ENCODE measurements at regions of chr3 and their contacts with region 1.

Region 1: GRCh38 chr3:27927882-27928281 is 205.8 kb upstream of the EOMES start:
- DNase-seq: no peak
- H3K4me3 Mint-ChIP-seq: peak overlapping the region; percentile 45
- H3K27ac Mint-ChIP-seq: peak overlapping the region; percentile 66
- H3K4me1 Mint-ChIP-seq: peaks cover 43% of the 10 kb centered on the region
- H3K27me3 Mint-ChIP-seq: no peaks in the 10 kb centered on the region

Region 2: DNA sequence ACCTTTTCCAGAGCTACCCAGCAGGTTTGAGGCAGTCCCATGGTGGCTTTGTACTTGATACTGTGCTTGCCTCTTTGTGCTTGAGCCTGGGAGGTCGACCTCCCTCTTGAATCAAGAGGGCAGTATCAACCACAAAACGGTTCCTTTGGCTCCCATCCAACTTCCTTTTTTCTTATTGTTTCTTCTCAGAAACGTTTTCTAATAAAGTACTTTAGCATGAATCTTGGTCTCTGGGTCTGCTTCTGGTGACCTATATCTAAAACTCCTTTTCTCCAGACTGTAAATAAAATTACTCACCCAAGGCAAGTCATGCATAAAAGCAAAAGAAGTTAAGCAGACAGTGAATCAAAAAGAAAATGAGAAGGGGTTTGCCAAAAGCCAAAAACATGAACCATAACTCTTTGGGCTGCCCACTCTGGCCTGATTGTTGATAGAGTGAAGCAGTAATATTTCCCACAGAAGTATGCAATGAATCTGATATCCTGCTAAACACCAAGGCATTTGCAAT is 331.5 kb before region 1 on chr3:
- intact Hi-C with region 1: loop called (anchors 10 kb)
- DNase-seq: no peak
- H3K4me3 Mint-ChIP-seq: no peak overlapping the region
- H3K27ac Mint-ChIP-seq: no peak overlapping the region
- H3K4me1 Mint-ChIP-seq: peaks cover 15% of the 10 kb centered on the region
- H3K27me3 Mint-ChIP-seq: no peaks in the 10 kb centered on the region

Region 3: GRCh38 chr3:27752926-27753325 is 175.0 kb before region 1 on chr3:
- intact Hi-C with region 1: loop called (anchors 5 kb)
- DNase-seq: peak; percentile 73
- H3K4me3 Mint-ChIP-seq: peak overlapping the region; percentile 6
- H3K27ac Mint-ChIP-seq: peak overlapping the region; percentile 90
- H3K4me1 Mint-ChIP-seq: peaks cover 21% of the 10 kb centered on the region
- H3K27me3 Mint-ChIP-seq: no peaks in the 10 kb centered on the region

Region 4: DNA sequence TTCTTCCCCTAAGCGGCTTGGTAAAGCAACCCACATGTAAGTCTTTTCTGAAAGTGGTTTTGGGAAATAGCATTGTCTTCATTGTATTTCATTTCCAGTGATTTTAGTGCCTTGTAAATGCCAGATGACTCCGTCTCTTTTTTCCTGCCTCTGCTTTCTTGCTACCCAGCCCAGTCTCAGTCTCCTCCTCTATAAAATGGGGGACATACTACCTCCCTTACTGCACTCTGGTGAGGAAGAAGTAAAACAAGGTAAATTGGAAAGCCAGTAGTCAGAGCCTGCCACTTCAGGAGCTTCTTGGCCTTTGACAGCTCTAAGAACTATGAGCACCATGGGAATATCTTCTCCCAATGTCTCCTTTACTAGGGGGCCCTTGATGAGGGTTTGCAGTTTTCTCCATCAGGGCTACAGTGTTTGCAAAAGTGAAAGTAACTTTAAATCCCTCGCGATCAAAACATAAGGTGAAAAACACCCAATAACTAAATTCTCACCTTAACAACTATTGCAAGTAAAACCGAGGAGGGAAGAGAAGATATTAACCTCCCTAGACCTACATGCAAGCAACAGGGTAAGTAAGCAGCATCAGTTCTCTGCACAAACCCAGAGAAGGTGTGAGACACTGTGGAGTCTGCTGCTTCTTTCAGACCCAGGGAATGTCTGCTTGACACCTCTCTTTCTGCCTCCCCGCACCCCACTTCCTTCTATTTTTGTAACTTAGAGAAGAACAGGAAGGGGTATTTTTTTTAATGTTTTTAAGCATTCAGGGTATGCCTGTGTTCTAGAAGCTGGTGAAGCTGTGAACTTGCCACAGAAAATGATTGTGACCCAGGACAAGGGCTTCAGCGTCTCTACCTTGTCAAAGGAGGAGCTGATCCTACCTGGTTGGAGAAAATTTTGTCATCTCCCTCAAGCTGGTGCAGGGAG is 46.7 kb before region 1 on chr3:
- intact Hi-C with region 1: loop called (anchors 5 kb)
- DNase-seq: peak; percentile 84
- H3K4me3 Mint-ChIP-seq: peak overlapping the region; percentile 88
- H3K27ac Mint-ChIP-seq: peak overlapping the region; percentile 88
- H3K4me1 Mint-ChIP-seq: peaks cover 33% of the 10 kb centered on the region
- H3K27me3 Mint-ChIP-seq: peaks cover 2% of the 10 kb centered on the region

Region 5: DNA sequence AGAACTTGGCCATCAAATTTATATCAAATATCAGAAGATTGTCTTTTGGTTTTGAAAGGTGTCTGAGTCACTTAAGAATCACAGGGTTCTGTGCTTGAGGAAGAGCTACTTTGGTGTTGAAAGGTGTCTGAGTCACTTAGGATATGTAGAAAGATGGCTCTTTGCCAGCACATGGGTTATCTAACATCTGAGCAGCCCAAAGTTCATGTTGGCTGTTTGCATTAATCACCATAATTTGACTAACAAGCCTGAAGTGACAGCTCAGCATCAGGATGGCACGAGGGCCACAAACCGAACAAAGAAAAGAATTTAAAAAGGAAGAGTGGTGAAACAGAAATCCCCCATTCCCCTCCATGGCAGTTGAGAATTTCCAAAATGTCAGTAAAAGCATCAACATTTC is 123.0 kb after region 1 on chr3:
- intact Hi-C with region 1: loop called (anchors 5 kb)
- DNase-seq: no peak
- H3K4me3 Mint-ChIP-seq: no peak overlapping the region
- H3K27ac Mint-ChIP-seq: peak overlapping the region; percentile 4
- H3K4me1 Mint-ChIP-seq: peaks cover 9% of the 10 kb centered on the region
- H3K27me3 Mint-ChIP-seq: peaks cover 2% of the 10 kb centered on the region

Measured in activated CD4-positive, alpha-beta T cell treated with anti-CD3 and anti-CD28 coated beads, Interleukin-2, amount 10 ng/mL, durations not matched to agents 24 days and 14 days (primary cell).